Heart right ventricle (tissue), 16 donors: ENCODE measurements at regions of chr19 and their contacts with region 1.

Region 1: DNA sequence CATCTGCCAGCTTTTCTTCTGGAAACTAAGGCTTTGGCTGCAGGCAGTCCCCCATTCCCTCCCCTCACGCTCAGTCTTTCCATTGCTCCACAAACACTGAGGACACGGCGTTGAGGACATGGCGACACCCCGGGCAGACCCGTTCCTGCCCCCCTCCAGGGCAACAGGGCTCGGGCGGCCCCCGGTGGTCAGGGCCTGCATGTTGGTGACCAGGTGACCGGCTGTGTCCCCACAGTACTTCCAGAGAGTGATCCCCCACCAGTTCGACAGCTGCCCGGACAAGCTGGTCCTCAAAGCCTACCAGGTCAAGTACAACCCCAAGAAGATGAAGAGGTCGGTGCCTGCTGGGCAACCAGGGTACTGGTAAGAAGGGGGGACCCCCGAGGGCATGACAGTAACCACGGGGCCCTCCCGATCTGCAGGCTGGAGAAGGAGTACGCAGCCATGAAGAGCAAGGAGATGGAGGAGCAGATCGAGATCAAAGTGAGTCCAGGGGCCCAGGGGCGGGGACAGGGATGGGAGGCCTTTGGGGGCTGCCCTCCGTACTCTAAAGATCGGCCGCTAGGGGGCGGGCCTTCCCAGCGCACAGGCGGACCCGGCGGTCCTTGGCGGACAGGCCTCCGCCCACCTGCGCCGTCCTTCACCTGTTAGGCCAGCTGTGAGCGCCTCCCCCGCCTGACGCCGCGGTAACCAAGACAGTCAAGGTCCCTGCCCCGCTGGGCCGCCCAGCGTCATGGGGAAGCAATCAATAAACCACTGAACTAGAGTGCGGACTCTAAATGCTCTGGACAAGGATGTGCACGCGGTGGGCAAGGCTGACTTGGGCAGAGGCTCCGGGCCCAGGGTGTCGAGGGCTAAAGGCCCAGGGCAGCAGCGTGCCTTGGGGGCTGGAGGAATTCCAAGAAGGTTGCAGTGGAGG is 21.1 kb downstream of the PRR36 start:
- DNase-seq: peak in 1 of 2 donors; percentile 66
- ATAC-seq: peak; percentile 31 to 80 (median 68)
- H3K4me3 ChIP-seq: no peak overlapping the region
- H3K27ac ChIP-seq: no peak overlapping the region
- H3K4me1 ChIP-seq: peaks cover 0 to 19% (median 6%) of the 10 kb centered on the region in 9 donors
- H3K27me3 ChIP-seq: no peaks in the 10 kb centered on the region
- CTCF ChIP-seq: peak; percentile 62 to 88 (median 82)

Region 2: GRCh38 chr19:7903244-7904073 is 50.3 kb after region 1 on chr19 and contains the start of gene MAP2K7:
- intact Hi-C with region 1: loop called in 1 of 10 experiments (anchors 5 kb)
- DNase-seq: peak; percentile 100
- ATAC-seq: peak; percentile 86 to 96 (median 92)
- H3K4me3 ChIP-seq: peak within 1 kb of the TSS; percentile 78 to 98 (median 88)
- H3K27ac ChIP-seq: peak within 1 kb of the TSS; percentile 72 to 93 (median 85)
- H3K4me1 ChIP-seq: peaks cover 14 to 54% (median 38%) of the 10 kb centered on the region in 9 donors
- H3K27me3 ChIP-seq: peaks cover 0 to 5% (median 0%) of the 10 kb centered on the region in 7 donors
- CTCF ChIP-seq: peak in 8 of 9 donors; percentile 38 to 86 (median 64)
- total RNA-seq, gene MAP2K7: 21.3 to 32.5 (median 24.6) TPM

Region 3: GRCh38 chr19:7919610-7920518 is 66.8 kb after region 1 on chr19 and contains the start of gene SNAPC2:
- intact Hi-C with region 1: loop called in 6 of 10 experiments (anchors 5 to 10 kb)
- DNase-seq: peak; percentile 97
- ATAC-seq: peak; percentile 61 to 78 (median 74)
- H3K4me3 ChIP-seq: peak within 1 kb of the TSS; percentile 55 to 90 (median 76)
- H3K27ac ChIP-seq: peak within 1 kb of the TSS; percentile 66 to 94 (median 88)
- H3K4me1 ChIP-seq: peaks cover 12 to 71% (median 45%) of the 10 kb centered on the region in 9 donors
- H3K27me3 ChIP-seq: peaks cover 11 to 50% (median 43%) of the 10 kb centered on the region in 7 donors
- CTCF ChIP-seq: peak in 2 of 9 donors; percentile 26 to 27
- total RNA-seq, gene SNAPC2: 5.7 to 12.9 (median 9.5) TPM

Region 4: DNA sequence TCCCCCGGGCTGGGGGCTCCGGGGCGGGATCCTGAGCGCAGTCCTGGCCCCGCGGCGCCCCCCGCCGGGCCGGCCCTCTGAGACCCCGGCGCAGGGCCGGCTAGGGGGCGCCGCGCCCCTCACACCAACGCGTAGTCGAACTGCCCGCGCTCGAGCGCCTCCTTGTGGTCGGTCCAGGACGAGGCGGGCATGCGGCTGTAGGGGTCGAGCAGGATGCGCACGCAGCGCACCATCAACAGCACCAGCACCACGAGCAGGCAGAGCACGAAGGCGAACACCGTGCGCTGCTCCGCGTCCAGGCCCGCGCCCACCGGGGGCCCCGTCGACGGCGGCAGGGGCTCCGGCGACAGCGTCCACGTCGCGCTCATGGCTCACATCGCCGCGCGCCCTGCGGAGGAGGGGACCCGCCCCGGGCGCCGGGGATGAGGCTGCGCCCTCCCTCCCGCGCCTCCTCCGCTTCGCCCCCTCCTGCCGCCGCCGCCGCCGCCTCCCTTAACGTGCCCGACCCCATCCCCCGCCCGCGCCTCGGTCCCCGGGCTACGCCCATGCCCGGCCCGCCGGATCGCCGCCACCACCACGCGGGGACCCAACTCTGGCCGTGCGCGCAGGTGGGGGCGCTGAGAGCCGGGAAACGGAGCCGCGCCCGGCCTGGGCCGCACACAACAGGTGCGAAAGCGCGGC is 72.2 kb after region 1 on chr19:
- intact Hi-C with region 1: loop called in 6 of 10 experiments (anchors 5 to 10 kb)
- DNase-seq: peak; percentile 60 to 76
- ATAC-seq: no peak
- H3K4me3 ChIP-seq: peak overlapping the region in 9 of 10 donors; percentile 35 to 51 (median 45)
- H3K27ac ChIP-seq: no peak overlapping the region
- H3K4me1 ChIP-seq: peaks cover 18 to 73% (median 45%) of the 10 kb centered on the region in 9 donors
- H3K27me3 ChIP-seq: peaks cover 0 to 8% (median 0%) of the 10 kb centered on the region in 7 donors
- CTCF ChIP-seq: peak; percentile 54 to 91 (median 79)